H1 (cell line): ENCODE measurements at regions of chr1 and their contacts with region 1.

Region 1: DNA sequence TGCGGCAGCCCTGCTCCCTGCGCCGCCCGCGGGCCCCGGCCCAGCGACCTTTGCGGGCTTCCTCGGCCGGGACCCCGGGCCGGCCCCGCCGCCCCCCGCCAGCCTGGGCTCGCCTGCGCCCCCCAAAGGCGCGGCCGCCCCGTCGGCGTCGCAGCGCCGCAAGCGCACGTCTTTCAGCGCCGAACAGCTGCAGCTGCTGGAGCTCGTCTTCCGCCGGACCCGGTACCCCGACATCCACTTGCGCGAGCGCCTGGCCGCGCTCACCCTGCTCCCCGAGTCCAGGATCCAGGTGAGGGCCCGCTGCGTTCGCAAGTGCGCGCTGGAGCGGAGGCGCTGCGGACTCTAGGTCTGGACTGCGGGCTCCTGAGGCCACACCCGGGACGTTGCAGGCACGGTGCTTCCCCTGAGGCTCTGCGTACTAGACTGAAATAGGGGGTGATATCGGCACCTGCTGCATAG is 351 bp downstream of the MIXL1 start:
- DNase-seq: peak in 1 of 2 experiments; percentile 82
- H3K4me3 ChIP-seq: peak overlapping the region; percentile 34 to 69 (median 60)
- H3K27ac ChIP-seq: no peak overlapping the region
- H3K4me1 ChIP-seq: peaks cover 0 to 7% (median 0%) of the 10 kb centered on the region in 4 experiments; a peak in 3 of 7 replicates
- H3K27me3 ChIP-seq: peaks cover 0 to 23% (median 18%) of the 10 kb centered on the region in 4 experiments; a peak in 6 of 7 replicates
- CTCF ChIP-seq: peak; percentile 23 to 41 (median 34); a peak in 3 of 4 replicates
- EP300 ChIP-seq: no peak
- POLR2A ChIP-seq: no peak
- RAD21 ChIP-seq: peak in 1 of 2 experiments; percentile 0; a peak in 1 of 4 replicates

Region 2: DNA sequence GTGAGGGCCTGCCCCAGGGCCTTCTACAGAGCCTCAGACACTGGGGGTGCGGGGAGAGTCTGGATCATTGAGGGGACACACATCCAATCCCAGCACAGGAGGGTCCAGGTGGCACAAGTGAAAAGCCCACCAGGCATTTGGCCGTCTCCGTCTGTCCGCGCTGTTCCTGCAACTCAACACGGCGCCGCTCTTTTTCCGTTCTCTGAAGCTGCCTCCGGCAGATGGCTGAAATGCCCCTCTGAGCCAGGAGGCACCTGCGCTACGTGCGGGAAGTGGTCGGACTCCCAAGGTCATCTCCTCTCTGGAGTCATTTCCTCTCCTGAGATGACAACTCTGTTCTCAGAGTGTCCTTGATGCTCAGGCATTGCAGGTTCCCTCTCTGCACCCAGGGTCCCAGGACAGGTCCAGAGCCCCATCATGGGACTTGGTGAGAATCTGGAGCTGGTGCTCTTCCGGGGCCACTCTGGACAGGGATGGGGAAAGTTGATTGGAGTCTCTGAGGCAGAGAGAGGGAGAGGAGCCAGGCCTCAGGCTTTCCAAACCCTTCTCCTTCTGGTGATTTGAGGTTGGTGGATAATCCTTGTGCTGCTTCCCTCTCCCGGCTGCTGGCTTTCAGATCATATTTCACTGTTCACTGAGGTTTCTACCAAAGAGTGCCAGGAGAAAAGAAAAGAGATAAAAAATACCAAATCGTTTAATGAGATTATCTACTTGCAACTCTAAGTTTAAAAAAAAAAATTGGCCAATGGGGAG is 14.3 kb before region 1 on chr1:
- CTCF ChIA-PET with region 1: interaction called, 11 read pairs
- POLR2A ChIA-PET with region 1: interaction called, 4 read pairs
- DNase-seq: no peak
- H3K4me3 ChIP-seq: no peak overlapping the region
- H3K27ac ChIP-seq: no peak overlapping the region
- H3K4me1 ChIP-seq: peaks cover 2 to 14% (median 8%) of the 10 kb centered on the region in 4 experiments
- H3K27me3 ChIP-seq: peaks cover 0 to 4% (median 1%) of the 10 kb centered on the region in 4 experiments; a peak in 2 of 7 replicates
- CTCF ChIP-seq: no peak
- EP300 ChIP-seq: no peak
- POLR2A ChIP-seq: no peak
- RAD21 ChIP-seq: no peak